CD8-positive, alpha-beta memory T cell (primary cell): ENCODE measurements at regions of chr12 and their contacts with region 1.

Region 1: DNA sequence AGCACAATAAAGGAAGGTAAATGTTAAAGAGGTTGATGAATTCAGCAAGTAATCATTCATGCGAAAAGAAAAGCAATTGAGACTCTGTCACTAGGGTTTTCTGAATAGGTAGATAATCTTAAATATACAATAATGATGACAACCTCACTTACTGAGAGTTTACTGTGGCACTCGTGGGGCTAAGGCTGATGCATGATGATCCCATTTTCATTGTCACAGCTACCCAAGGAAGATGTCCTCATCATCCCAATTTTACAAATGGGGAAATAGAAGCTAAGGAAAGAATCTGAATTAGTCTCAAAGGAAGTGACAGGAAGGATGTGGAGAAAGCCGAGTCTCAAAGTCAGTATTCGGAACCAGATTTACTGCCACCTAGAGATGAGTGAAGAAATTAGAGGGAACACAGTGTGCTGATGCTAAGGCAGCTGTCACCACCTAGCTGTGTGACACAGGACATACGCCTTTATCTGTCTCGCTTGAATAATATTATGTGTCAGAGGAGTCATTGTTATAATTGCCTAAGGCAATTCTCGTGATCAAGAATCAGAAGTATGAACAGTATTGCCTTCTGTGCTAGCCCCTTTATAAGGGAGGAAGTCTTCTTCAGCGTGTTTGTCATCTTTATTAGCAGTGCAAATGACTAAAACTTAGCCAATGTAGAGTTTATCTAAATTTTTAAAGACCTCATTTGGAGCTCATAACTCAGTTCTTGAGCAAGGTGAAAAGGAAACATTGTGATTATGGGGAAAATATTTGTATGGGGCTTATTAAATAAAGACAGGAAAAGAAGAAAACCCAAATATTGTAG is 63.2 kb downstream of the ERGIC2 start:
- DNase-seq: peak; percentile 9 to 59 (median 47)
- H3K4me3 ChIP-seq: no peak overlapping the region
- H3K4me3 Mint-ChIP-seq: peak overlapping the region in 2 of 7 donors; percentile 25 to 47
- H3K27ac ChIP-seq: no peak overlapping the region
- H3K27ac Mint-ChIP-seq: no peak overlapping the region
- H3K4me1 ChIP-seq: no peaks in the 10 kb centered on the region
- H3K4me1 Mint-ChIP-seq: peaks cover 8 to 11% (median 9%) of the 10 kb centered on the region in 3 donors
- H3K27me3 ChIP-seq: no peaks in the 10 kb centered on the region
- H3K27me3 Mint-ChIP-seq: no peaks in the 10 kb centered on the region

Region 2: GRCh38 chr12:29073628-29074239 is 244.0 kb before region 1 on chr12:
- CTCF ChIA-PET with region 1: interaction called, 30 read pairs
- POLR2A ChIA-PET with region 1: no interaction called
- DNase-seq: peak in 2 of 5 donors; percentile 10 to 21
- H3K4me3 ChIP-seq: no peak overlapping the region
- H3K4me3 Mint-ChIP-seq: no peak overlapping the region
- H3K27ac ChIP-seq: no peak overlapping the region
- H3K27ac Mint-ChIP-seq: no peak overlapping the region
- H3K4me1 ChIP-seq: no peaks in the 10 kb centered on the region
- H3K4me1 Mint-ChIP-seq: no peaks in the 10 kb centered on the region
- H3K27me3 ChIP-seq: no peaks in the 10 kb centered on the region
- H3K27me3 Mint-ChIP-seq: peaks cover 12 to 53% of the 10 kb centered on the region in 2 donors

Region 3: DNA sequence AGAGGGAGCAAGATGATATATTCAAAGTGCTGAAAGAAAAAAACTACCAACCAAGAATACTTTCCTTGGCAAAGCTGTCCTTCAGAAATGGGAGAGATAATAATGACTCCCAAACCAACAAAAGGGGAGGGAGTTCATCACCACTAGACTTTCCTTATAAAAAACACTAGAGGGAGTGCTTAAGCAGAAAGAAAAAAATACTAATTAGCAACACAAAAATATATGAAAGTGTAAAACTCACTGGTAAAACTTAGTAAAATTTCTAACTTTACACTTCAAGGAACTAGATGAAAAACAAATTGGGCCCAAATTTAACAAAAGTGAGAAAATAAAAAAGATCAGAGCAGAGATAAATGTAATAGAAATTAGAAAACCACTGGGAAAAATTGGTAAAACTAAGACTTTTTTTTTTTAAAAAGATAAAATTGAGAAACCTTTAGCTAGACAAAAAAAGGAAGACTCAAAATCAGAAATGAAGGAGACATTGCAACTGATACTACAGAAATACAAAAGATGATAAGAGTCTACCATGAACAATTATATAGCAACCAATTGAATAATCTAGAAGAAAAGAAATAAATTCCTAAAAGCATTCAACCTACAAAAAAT is 229.0 kb before region 1 on chr12:
- CTCF ChIA-PET with region 1: interaction called, 20 read pairs
- POLR2A ChIA-PET with region 1: no interaction called
- DNase-seq: no peak
- H3K4me3 ChIP-seq: no peak overlapping the region
- H3K4me3 Mint-ChIP-seq: no peak overlapping the region
- H3K27ac ChIP-seq: no peak overlapping the region
- H3K27ac Mint-ChIP-seq: peak overlapping the region in 1 of 8 donors; percentile 70
- H3K4me1 ChIP-seq: no peaks in the 10 kb centered on the region
- H3K4me1 Mint-ChIP-seq: peaks cover 0 to 5% (median 1%) of the 10 kb centered on the region in 3 donors
- H3K27me3 ChIP-seq: no peaks in the 10 kb centered on the region
- H3K27me3 Mint-ChIP-seq: peaks cover 0 to 6% of the 10 kb centered on the region in 2 donors

Region 4: GRCh38 chr12:29278673-29279420 is 38.9 kb before region 1 on chr12:
- CTCF ChIA-PET with region 1: no interaction called
- POLR2A ChIA-PET with region 1: no interaction called
- DNase-seq: no peak
- H3K4me3 ChIP-seq: no peak overlapping the region
- H3K4me3 Mint-ChIP-seq: no peak overlapping the region
- H3K27ac ChIP-seq: no peak overlapping the region
- H3K27ac Mint-ChIP-seq: peak overlapping the region in 1 of 8 donors; percentile 48
- H3K4me1 ChIP-seq: no peaks in the 10 kb centered on the region
- H3K4me1 Mint-ChIP-seq: no peaks in the 10 kb centered on the region
- H3K27me3 ChIP-seq: no peaks in the 10 kb centered on the region
- H3K27me3 Mint-ChIP-seq: no peaks in the 10 kb centered on the region